Activated naive CD4-positive, alpha-beta T cell treated with anti-CD3 and anti-CD28 coated beads for 36 hours (primary cell): ENCODE measurements at regions of chr2 and their contacts with region 1.

Region 1: DNA sequence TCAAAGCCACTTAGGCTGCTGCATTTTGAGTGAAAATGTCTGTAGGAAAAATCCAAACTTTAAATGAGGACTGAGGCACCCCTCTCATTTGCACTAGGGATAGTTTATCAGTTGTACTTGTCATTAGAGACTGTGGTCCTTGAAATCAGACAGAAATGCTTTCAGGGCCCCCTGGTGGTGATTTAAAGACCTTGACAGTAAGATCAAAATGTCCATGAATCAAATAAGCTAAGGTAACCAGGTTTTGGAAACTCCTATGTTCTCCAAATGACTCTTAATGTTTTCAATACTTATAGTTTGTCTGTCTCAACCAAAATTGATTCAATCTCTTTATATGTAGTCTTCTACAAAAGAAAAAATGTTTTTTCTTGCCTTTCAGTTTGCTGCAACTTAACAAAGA is 28.8 kb upstream of the DDX18 start:
- DNase-seq: peak; percentile 57
- H3K4me3 Mint-ChIP-seq: no peak overlapping the region
- H3K27ac Mint-ChIP-seq: no peak overlapping the region
- H3K4me1 Mint-ChIP-seq: no peaks in the 10 kb centered on the region
- H3K27me3 Mint-ChIP-seq: no peaks in the 10 kb centered on the region

Region 2: DNA sequence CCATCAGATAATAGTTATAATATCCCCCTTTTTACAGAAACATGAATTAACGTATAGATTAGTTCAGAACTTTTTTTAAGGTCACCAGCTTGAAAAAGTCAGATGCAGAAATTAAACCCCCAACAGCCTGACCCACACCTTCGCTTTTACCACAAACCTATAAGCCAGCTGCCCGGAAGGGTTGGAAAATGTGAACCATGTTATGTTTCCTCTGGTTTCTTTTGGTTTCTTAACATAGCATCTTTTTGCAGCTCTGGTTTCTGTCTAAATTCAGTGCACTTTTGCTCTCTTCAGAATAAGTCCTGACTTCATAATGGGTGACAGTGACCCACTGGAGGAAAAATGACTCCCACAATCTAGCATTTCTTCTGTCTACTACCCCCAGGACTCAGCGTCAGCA is 353.0 kb before region 1 on chr2:
- CTCF ChIA-PET with region 1: no interaction called
- intact Hi-C with region 1: no loop called
- DNase-seq: no peak
- H3K4me3 Mint-ChIP-seq: no peak overlapping the region
- H3K27ac Mint-ChIP-seq: no peak overlapping the region
- H3K4me1 Mint-ChIP-seq: no peaks in the 10 kb centered on the region
- H3K27me3 Mint-ChIP-seq: no peaks in the 10 kb centered on the region

Region 3: GRCh38 chr2:117470311-117471095 is 315.2 kb before region 1 on chr2:
- CTCF ChIA-PET with region 1: interaction called, 4 read pairs
- intact Hi-C with region 1: loop called (anchors 1 kb)
- DNase-seq: peak; percentile 26
- H3K4me3 Mint-ChIP-seq: no peak overlapping the region
- H3K27ac Mint-ChIP-seq: no peak overlapping the region
- H3K4me1 Mint-ChIP-seq: no peaks in the 10 kb centered on the region
- H3K27me3 Mint-ChIP-seq: no peaks in the 10 kb centered on the region